ENCODE measurements at regions of chr2 and their contacts with region 1.

Region 1: DNA sequence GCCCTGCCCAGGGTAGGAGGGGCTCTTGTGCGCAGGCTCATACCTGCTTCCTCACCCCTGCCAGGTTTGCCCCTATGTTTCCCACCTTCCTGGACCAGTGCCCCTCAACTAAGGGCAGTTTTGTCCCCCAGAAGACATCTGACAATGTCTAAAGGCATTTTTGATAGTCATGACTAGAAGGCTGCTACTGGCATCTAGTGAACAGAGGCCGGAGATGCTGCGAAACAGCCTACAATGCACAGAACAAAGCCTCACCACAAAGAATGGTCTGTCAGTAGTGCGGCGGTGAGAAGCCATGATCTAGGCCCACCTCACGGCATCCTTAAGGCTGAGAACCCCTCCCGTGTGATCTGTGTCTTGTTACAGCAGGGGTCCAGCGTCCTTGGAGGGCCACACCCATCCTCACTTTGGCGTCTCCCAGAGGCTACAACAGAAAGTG is 96.0 kb downstream of the TMEM17 start:
- DNase-seq: peak; percentile 27
- ATAC-seq: peak; percentile 32
- H3K4me3 Mint-ChIP-seq: no peak overlapping the region
- H3K27ac Mint-ChIP-seq: no peak overlapping the region
- H3K4me1 Mint-ChIP-seq: peaks cover 12% of the 10 kb centered on the region
- H3K27me3 Mint-ChIP-seq: no peaks in the 10 kb centered on the region
- CTCF ChIP-seq: no peak

Region 2: GRCh38 chr2:61922714-61923113 is 487.3 kb before region 1 on chr2:
- CTCF ChIA-PET with region 1: interaction called, 5 read pairs
- POLR2A ChIA-PET with region 1: no interaction called
- intact Hi-C with region 1: loop called (anchors 2 kb)
- DNase-seq: no peak
- ATAC-seq: no peak
- H3K4me3 Mint-ChIP-seq: no peak overlapping the region
- H3K27ac Mint-ChIP-seq: no peak overlapping the region
- H3K4me1 Mint-ChIP-seq: no peaks in the 10 kb centered on the region
- H3K27me3 Mint-ChIP-seq: no peaks in the 10 kb centered on the region
- CTCF ChIP-seq: no peak

Region 3: DNA sequence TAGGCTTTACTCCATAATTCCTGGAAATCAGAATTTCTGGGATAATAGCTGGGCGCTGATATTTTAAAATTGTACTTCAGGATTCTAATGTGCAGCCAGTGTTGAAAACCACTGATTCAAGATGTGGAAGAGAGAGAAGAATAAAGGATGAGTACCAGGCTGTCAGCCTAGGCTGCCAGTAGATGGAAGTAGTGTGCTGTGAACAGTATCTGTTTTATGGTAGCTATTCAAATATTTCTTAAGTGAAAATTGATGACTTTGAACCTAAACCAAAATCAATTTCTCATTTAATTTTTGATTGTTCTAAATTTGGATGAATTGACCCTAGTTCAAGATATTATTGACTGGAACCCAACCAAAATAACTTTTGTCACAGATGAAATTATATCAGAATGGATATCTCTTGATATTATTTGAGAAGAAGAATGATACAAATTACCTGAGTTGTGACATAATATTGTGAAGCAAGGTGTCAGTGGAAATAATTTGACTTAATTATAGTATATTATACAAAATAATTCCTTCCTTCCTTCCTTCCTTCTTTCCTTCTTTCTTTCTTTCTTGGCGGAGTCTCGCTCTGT is 416.5 kb before region 1 on chr2:
- CTCF ChIA-PET with region 1: interaction called, 19 read pairs
- POLR2A ChIA-PET with region 1: no interaction called
- intact Hi-C with region 1: loop called (anchors 2 kb)
- DNase-seq: peak; percentile 46
- ATAC-seq: peak; percentile 71
- H3K4me3 Mint-ChIP-seq: no peak overlapping the region
- H3K27ac Mint-ChIP-seq: no peak overlapping the region
- H3K4me1 Mint-ChIP-seq: no peaks in the 10 kb centered on the region
- H3K27me3 Mint-ChIP-seq: no peaks in the 10 kb centered on the region
- CTCF ChIP-seq: peak; percentile 74

Region 4: DNA sequence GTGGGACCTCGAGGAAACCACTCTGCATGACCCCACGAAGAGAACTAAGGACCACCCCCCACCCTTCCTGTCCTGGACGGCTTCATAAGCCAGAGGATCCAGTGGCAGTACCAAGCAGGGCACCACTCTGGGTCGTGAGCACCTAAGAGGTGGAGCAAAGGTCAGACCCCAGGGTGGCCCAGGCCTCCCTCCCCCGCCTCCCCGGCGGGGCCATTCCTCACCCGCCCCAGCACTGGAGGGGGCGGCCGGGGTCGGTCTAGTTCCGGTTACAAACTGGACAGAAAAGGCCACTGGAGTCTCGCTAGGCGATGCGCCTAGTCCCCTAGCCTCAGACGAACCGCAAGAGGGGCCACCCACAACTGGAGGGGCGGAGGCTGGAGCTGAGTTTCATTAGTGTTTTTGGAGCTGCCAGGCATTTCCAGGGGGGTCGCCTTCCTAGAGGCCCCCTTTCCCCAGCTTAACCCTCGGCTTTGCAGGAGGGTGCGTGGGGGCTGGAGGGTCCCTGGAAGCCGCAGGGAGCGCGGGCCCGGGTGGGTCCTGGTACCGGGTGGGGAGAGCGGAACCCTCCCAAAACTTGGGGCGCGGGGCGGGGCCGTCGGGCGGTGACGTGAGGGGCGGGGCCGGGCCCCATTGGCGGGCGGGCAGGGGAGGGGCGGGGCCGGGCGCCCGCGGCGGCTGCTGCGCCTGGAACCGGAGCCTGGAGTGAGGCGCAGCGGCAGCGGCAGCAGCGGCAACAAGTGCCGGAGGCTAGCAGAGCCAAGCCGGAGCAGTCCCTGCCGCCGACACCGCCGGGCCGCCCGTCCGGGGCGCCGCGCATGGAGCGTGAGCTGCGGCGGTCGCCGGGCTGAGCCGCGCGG is 214.4 kb before region 1 on chr2 and contains the start of gene B3GNT2:
- CTCF ChIA-PET with region 1: interaction called, 12 read pairs
- POLR2A ChIA-PET with region 1: no interaction called
- intact Hi-C with region 1: loop called (anchors 5 kb)
- DNase-seq: peak; percentile 86
- ATAC-seq: peak; percentile 66
- H3K4me3 Mint-ChIP-seq: peak within 1 kb of the TSS; percentile 96
- H3K27ac Mint-ChIP-seq: peak within 1 kb of the TSS; percentile 95
- H3K4me1 Mint-ChIP-seq: peaks cover 22% of the 10 kb centered on the region
- H3K27me3 Mint-ChIP-seq: no peaks in the 10 kb centered on the region
- CTCF ChIP-seq: no peak
- total RNA-seq, gene B3GNT2: 44.3 to 45.5 TPM

Region 5: GRCh38 chr2:62202019-62202722 is 207.9 kb before region 1 on chr2:
- CTCF ChIA-PET with region 1: interaction called, 12 read pairs
- POLR2A ChIA-PET with region 1: no interaction called
- intact Hi-C with region 1: loop called (anchors 5 kb)
- DNase-seq: peak; percentile 45
- ATAC-seq: peak; percentile 11
- H3K4me3 Mint-ChIP-seq: peak overlapping the region; percentile 96
- H3K27ac Mint-ChIP-seq: peak overlapping the region; percentile 96
- H3K4me1 Mint-ChIP-seq: peaks cover 84% of the 10 kb centered on the region
- H3K27me3 Mint-ChIP-seq: no peaks in the 10 kb centered on the region
- CTCF ChIP-seq: no peak

Region 6: GRCh38 chr2:62306751-62307468 is 103.1 kb before region 1 on chr2:
- CTCF ChIA-PET with region 1: interaction called, 5 read pairs
- POLR2A ChIA-PET with region 1: interaction called, 5 read pairs
- intact Hi-C with region 1: loop called (anchors 5 kb)
- DNase-seq: peak; percentile 84
- ATAC-seq: peak; percentile 28
- H3K4me3 Mint-ChIP-seq: peak overlapping the region; percentile 66
- H3K27ac Mint-ChIP-seq: peak overlapping the region; percentile 98
- H3K4me1 Mint-ChIP-seq: peaks cover 90% of the 10 kb centered on the region
- H3K27me3 Mint-ChIP-seq: peaks cover 2% of the 10 kb centered on the region
- CTCF ChIP-seq: no peak